ENCODE measurements at regions of chr10 and their contacts with region 1.

Region 1: GRCh38 chr10:33134011-33134751 is 176.2 kb upstream of the ITGB1 start:
- DNase-seq: peak; percentile 89
- ATAC-seq: peak; percentile 77
- H3K4me3 Mint-ChIP-seq: peak overlapping the region; percentile 25
- H3K27ac Mint-ChIP-seq: peak overlapping the region; percentile 83
- H3K4me1 Mint-ChIP-seq: peaks cover 83% of the 10 kb centered on the region
- H3K27me3 Mint-ChIP-seq: no peaks in the 10 kb centered on the region

Region 2: DNA sequence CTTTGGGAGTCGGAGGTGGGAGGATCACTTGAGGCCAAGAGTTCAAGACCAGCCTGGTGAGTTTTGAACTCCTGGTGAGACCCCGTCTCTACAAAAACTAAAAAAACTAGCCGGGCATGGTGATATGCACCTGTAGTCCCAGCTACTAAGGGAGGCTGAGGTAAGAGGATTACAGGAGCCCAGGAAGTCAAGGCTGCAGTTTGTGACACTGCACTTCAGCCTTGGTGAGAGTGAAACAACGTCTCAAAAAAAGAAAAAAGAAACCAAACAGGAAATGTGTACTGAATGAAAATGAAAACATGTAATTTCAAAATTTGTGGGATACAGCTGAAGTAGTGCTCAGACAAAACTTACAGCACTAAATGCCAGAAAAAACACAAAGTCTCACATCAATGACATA is 1213.2 kb before region 1 on chr10:
- CTCF ChIA-PET with region 1: no interaction called
- POLR2A ChIA-PET with region 1: no interaction called
- intact Hi-C with region 1: loop called (anchors 5 to 10 kb)
- DNase-seq: peak; percentile 32
- ATAC-seq: peak; percentile 75
- H3K4me3 Mint-ChIP-seq: peak overlapping the region; percentile 59
- H3K27ac Mint-ChIP-seq: peak overlapping the region; percentile 88
- H3K4me1 Mint-ChIP-seq: peaks cover 73% of the 10 kb centered on the region
- H3K27me3 Mint-ChIP-seq: no peaks in the 10 kb centered on the region

Region 3: DNA sequence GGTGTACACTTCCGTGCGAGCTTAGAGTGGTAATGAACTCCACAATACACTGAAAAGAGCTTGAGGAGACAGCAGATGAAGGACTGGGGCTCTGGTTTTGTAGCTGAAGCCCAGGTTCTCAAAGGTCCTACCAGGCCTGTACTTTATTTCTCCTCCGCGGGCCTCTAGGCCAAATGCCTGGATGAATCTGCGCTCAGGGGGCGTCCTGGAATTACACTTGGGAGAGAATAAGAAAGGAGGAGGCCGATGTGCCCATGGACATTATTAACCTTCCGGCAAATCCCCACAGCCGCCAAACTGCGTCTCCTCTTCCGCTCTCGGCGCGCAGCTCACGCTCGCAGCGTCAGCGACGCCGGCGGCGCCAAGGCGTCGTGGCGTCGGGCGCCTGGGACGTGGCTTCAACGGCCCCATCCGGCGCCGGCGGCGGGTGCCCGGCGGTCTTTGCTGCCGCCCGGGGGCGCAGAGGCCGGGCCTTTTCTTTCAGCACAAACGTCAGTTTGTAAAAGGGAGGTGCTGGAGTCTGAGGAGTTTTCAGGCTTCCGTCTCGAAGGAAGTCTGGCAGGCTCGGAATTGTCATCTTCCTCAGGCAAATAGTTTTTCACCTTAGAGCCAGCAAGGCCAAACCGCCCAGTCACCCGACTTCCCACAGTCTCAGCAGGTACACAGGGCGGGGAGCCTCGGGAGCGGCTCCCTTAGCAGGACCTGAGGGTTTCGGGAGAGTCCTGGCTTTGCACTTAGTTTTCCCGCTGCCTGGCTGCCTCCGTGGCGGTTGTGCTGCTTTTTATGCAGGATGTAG is 688.2 kb before region 1 on chr10 and contains the start of gene CCDC7:
- CTCF ChIA-PET with region 1: no interaction called
- POLR2A ChIA-PET with region 1: no interaction called
- intact Hi-C with region 1: loop called (anchors 5 to 10 kb)
- DNase-seq: peak; percentile 91
- ATAC-seq: peak; percentile 97
- H3K4me3 Mint-ChIP-seq: peak within 1 kb of the TSS; percentile 82
- H3K27ac Mint-ChIP-seq: peak within 1 kb of the TSS; percentile 99
- H3K4me1 Mint-ChIP-seq: peaks cover 10% of the 10 kb centered on the region
- H3K27me3 Mint-ChIP-seq: no peaks in the 10 kb centered on the region
- total RNA-seq, gene CCDC7: 9.0 TPM

Region 4: DNA sequence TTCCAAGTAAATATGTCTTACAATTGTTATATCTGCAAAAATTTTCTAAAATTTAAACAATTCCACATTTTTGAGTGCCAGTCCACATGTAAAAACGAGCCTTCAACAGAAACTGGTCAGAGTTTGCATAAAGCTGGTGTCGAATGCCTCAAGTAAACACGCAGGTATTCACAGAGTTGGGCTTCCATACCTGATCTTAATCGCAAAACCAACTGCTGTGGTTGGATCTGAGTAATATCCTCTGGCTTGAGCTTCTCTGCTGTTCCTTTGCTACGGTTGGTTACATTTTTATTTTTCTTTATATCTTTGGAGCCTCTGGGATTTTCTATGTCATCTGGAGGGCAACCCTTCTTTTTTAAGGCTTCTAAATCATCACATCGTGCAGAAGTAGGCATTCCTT is 204.5 kb before region 1 on chr10:
- CTCF ChIA-PET with region 1: no interaction called
- POLR2A ChIA-PET with region 1: no interaction called
- intact Hi-C with region 1: no loop called
- DNase-seq: no peak
- ATAC-seq: no peak
- H3K4me3 Mint-ChIP-seq: no peak overlapping the region
- H3K27ac Mint-ChIP-seq: no peak overlapping the region
- H3K4me1 Mint-ChIP-seq: peaks cover 13% of the 10 kb centered on the region
- H3K27me3 Mint-ChIP-seq: no peaks in the 10 kb centered on the region

Region 5: DNA sequence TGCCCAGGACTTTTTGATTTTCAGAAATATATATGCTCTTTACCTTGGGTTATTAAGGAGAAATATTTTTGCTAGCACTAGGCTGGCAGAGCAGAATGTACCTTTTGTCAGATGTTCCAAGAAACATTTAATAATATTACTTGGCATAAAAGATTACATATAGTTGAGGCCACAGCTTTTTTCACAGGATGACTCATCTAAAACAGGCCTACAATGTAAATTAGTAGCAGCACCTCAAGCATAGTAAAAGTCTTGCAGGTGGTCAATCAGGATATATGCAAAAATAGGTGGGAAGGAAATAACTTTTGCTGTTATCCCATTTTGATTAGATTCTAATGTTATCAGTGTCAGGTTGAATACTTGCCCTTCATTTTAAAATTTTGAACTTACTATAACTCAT is 161.3 kb before region 1 on chr10:
- CTCF ChIA-PET with region 1: no interaction called
- POLR2A ChIA-PET with region 1: no interaction called
- intact Hi-C with region 1: no loop called
- DNase-seq: no peak
- ATAC-seq: no peak
- H3K4me3 Mint-ChIP-seq: no peak overlapping the region
- H3K27ac Mint-ChIP-seq: no peak overlapping the region
- H3K4me1 Mint-ChIP-seq: peaks cover 15% of the 10 kb centered on the region
- H3K27me3 Mint-ChIP-seq: no peaks in the 10 kb centered on the region

Region 6: DNA sequence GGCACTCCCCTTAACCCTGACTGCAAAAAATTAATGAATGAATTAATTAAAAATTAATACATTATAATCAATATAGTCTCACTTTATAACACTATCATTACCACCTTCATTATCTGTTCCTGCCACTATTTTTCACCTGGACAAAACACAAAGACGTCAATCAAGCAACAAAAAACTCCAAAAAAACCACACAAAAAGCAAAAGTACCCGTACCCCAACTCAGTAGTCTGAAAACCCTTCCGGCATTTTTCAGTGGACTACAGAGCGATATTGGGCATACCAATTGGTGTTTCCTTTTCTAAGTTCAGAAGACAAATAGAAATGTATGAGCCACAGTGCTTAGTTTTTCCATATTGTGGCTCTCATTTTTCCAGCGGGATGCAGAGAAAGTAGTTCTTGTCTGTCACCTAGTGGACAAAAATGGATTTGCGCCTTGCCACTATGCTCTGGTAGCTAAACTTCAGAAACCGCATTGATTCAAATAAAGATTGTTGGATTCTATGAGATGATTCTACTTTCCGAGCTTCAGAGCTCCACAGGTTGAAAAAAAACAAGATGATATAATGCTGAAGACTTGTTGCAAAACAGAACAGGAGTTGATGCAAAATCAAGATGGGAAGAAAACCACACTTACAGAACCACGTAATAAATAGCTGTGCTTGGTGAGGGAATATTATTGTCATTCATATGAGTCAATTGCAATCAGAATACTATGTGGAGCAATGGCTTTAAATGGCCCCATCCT is 125.5 kb before region 1 on chr10:
- CTCF ChIA-PET with region 1: interaction called, 18 read pairs
- POLR2A ChIA-PET with region 1: no interaction called
- intact Hi-C with region 1: loop called (anchors 1 kb)
- DNase-seq: peak; percentile 80
- ATAC-seq: peak; percentile 61
- H3K4me3 Mint-ChIP-seq: peak overlapping the region; percentile 40
- H3K27ac Mint-ChIP-seq: peak overlapping the region; percentile 67
- H3K4me1 Mint-ChIP-seq: peaks cover 41% of the 10 kb centered on the region
- H3K27me3 Mint-ChIP-seq: peaks cover 7% of the 10 kb centered on the region

Region 7: GRCh38 chr10:33248638-33249037 is 114.5 kb after region 1 on chr10:
- CTCF ChIA-PET with region 1: interaction called, 3 read pairs
- POLR2A ChIA-PET with region 1: no interaction called
- intact Hi-C with region 1: loop called (anchors 1 to 5 kb)
- DNase-seq: peak; percentile 30
- ATAC-seq: peak; percentile 83
- H3K4me3 Mint-ChIP-seq: no peak overlapping the region
- H3K27ac Mint-ChIP-seq: peak overlapping the region; percentile 39
- H3K4me1 Mint-ChIP-seq: peaks cover 71% of the 10 kb centered on the region
- H3K27me3 Mint-ChIP-seq: peaks cover 12% of the 10 kb centered on the region

Region 8: GRCh38 chr10:33365871-33366411 is 231.8 kb after region 1 on chr10:
- CTCF ChIA-PET with region 1: interaction called, 4 read pairs
- POLR2A ChIA-PET with region 1: no interaction called
- intact Hi-C with region 1: loop called in 1 of 2 experiments (anchors 5 kb)
- DNase-seq: peak; percentile 56
- ATAC-seq: peak; percentile 95
- H3K4me3 Mint-ChIP-seq: no peak overlapping the region
- H3K27ac Mint-ChIP-seq: no peak overlapping the region
- H3K4me1 Mint-ChIP-seq: peaks cover 17% of the 10 kb centered on the region
- H3K27me3 Mint-ChIP-seq: peaks cover 33% of the 10 kb centered on the region

Region 9: DNA sequence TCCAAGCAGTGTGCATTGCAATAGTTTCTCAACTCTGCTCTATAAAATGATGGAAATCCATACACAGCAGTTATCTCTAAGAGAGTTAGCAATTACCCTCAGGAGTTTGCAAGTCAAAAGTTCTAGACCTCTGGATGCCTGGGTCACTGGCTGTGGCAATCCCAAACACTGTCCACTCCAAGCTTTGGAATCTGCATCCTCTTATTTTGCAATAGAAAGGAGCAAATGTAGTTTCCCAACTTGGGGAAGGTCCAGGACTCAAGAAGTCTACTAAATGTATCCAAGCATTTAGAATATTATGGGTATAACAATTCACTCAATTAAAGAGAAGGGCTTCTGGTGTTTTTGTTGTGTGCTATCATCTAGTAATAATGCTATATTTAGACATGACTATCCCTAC is 331.6 kb after region 1 on chr10:
- CTCF ChIA-PET with region 1: no interaction called
- POLR2A ChIA-PET with region 1: no interaction called
- intact Hi-C with region 1: no loop called
- DNase-seq: no peak
- ATAC-seq: no peak
- H3K4me3 Mint-ChIP-seq: no peak overlapping the region
- H3K27ac Mint-ChIP-seq: no peak overlapping the region
- H3K4me1 Mint-ChIP-seq: no peaks in the 10 kb centered on the region
- H3K27me3 Mint-ChIP-seq: peaks cover 11% of the 10 kb centered on the region

Measured in activated CD4-positive, alpha-beta T cell treated with anti-CD3 and anti-CD28 coated beads for 36 hours (primary cell).